ENCODE measurements at regions of chr1 and their contacts with region 1.

Region 1: GRCh38 chr1:66253330-66253921 is 280.5 kb upstream of the SGIP1 start:
- DNase-seq: no peak
- H3K4me3 ChIP-seq: no peak overlapping the region
- H3K27ac ChIP-seq: no peak overlapping the region
- H3K4me1 ChIP-seq: peaks cover 0 to 20% (median 7%) of the 10 kb centered on the region in 4 donors
- H3K27me3 ChIP-seq: no peaks in the 10 kb centered on the region
- CTCF ChIP-seq: peak; percentile 60 to 80 (median 73)
- EP300 ChIP-seq: no peak
- POLR2A ChIP-seq: no peak

Region 2: DNA sequence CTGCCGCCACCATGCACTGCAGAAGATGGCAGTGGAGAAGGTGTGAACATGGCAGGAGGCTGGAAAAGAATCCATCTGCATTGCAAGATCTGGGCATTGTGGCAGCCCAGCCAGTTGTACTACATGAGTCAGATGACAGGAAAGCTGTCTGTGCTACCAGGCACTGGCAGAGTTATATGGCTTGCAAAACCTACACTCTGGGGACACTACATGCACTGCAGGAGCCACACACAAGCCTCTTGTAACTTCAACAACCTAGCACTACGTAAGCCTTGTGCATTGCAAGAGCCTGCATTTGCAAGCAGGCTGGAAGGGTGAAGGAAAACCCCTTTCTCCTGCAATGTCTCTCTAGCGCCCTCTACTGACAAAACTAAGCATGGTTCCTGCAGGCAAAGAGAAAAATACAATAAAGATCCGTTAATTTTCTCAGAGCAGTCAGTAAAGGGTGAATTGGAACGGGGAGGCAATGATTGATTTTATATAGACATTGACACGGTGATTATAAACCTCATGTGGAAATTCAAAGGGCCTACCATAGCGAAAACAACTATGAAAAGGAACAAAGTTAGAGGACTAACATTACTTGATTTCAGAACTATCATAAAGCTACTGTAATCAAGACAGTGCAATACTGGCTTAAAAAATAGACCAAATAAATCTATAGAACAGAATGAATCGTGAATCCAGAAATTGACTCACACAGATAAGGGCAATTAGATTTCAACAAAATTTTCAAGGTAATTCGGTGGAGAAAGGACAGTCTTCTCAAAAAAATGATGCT is 472.6 kb after region 1 on chr1:
- intact Hi-C with region 1: loop called (anchors 10 kb)
- DNase-seq: no peak
- H3K4me3 ChIP-seq: no peak overlapping the region
- H3K27ac ChIP-seq: no peak overlapping the region
- H3K4me1 ChIP-seq: peaks cover 0 to 5% (median 0%) of the 10 kb centered on the region in 4 donors
- H3K27me3 ChIP-seq: no peaks in the 10 kb centered on the region
- CTCF ChIP-seq: peak in 3 of 4 experiments; percentile 51 to 72 (median 62)
- EP300 ChIP-seq: no peak
- POLR2A ChIP-seq: no peak

Region 3: DNA sequence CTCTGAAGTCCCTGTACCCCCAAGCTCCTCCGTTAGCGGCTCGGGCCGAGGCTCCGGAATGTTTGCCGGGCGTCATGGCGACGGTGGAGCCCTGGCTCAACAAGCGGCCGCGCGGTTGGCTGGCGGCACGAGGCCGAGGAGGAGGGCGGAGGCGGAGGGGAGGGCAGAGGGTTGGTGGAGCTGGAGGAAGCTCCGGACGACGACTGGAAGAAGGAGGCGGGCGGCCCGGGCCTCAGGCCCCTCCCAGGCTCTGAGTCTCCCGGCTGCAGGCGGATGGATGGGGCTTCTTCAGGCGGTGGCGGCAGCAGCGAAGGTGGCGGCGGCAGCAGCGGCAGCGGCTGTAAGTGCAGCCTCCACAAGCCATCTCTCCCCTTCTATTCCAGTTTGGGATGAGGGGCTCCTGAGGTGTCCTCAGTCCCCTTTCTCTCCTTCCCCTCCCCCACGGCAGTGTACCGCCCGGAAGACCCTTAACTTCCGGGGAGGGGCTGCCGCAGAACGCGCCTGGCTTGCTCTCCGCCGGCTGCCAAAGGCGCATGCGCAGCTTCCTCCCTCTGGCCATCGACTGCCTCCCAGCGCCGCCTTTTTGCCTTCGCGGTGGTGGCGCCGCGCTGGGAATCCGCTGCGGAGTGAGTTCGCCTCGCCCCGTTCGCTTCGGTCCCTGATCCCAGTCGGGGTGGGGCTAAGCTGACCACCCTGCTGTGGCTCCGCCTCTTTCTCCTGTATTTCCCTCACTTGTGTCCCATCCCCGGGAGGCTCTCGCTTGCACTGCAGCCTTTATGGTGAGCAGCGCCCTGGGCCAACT is 671.5 kb after region 1 on chr1 and contains the starts of genes DNAI4 and MIER1:
- intact Hi-C with region 1: loop called (anchors 10 kb)
- DNase-seq: peak; percentile 99
- H3K4me3 ChIP-seq: peak within 1 kb of the TSS; percentile 59 to 91 (median 74)
- H3K27ac ChIP-seq: peak within 1 kb of the TSS; percentile 89 to 95 (median 92)
- H3K4me1 ChIP-seq: peaks cover 0 to 38% (median 32%) of the 10 kb centered on the region in 4 donors
- H3K27me3 ChIP-seq: no peaks in the 10 kb centered on the region
- CTCF ChIP-seq: peak; percentile 27 to 58 (median 40)
- EP300 ChIP-seq: peak in 2 of 4 donors; percentile 34 to 43
- POLR2A ChIP-seq: peak; percentile 23 to 65
- total RNA-seq, gene DNAI4: 5.6 to 16.1 (median 9.5) TPM
- total RNA-seq, gene MIER1: 49.0 to 65.6 (median 58.4) TPM

Measured in sigmoid colon (tissue), 7 donors.